Activated naive CD4-positive, alpha-beta T cell treated with anti-CD3 and anti-CD28 coated beads for 36 hours (primary cell): ENCODE measurements at regions of chr1 and their contacts with region 1.

Region 1: GRCh38 chr1:185156854-185157598 is at the starts of genes SWT1 and TRMT1L:
- DNase-seq: peak; percentile 98
- H3K4me3 Mint-ChIP-seq: peak within 1 kb of the TSS; percentile 92
- H3K27ac Mint-ChIP-seq: peak within 1 kb of the TSS; percentile 91
- H3K4me1 Mint-ChIP-seq: peaks cover 44% of the 10 kb centered on the region
- H3K27me3 Mint-ChIP-seq: no peaks in the 10 kb centered on the region
- total RNA-seq, gene SWT1: 1.7 to 2.9 TPM
- total RNA-seq, gene TRMT1L: 26.6 to 28.7 TPM

Region 2: DNA sequence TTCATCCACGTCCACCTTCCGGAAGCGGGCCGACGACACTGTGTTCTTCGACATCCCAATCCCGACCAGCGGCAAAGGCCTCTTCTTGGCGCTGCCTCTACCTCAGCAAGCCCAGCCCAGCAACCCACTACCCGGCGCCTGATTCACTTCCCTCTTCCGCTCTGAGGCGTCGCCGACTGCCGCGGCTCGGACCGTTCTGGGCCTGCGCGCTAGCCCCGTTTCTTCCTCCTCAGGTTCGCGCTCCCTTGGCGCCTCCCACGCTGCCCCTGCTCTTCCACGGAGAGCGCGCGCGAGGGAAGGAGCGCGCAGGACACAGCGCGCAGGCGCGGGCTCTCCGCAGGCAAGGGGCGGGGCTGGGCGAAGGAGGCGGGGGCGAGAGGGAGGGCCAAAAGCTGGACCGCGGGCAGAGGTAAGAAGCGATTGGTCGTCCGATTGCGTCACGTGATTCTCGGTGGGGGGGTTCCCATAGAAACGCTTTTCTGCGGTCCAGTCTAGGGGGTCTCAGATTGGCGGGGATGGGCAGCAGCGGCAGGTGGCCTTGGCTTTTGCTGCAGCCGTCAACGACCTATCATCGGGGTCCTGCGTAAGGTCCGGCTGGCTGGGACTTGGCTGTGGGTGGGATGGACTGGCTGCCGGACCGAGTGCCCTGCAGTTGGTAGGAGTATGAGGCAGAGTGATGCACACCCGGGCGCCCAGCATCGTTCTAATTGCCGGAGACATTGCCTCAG is 1521.3 kb before region 1 on chr1 and contains the start of gene ARPC5:
- CTCF ChIA-PET with region 1: no interaction called
- intact Hi-C with region 1: loop called (anchors 1 kb)
- DNase-seq: peak; percentile 97
- H3K4me3 Mint-ChIP-seq: peak within 1 kb of the TSS; percentile 98
- H3K27ac Mint-ChIP-seq: peak within 1 kb of the TSS; percentile 99
- H3K4me1 Mint-ChIP-seq: peaks cover 27% of the 10 kb centered on the region
- H3K27me3 Mint-ChIP-seq: no peaks in the 10 kb centered on the region
- total RNA-seq, gene ARPC5: 162 to 164 TPM

Region 3: DNA sequence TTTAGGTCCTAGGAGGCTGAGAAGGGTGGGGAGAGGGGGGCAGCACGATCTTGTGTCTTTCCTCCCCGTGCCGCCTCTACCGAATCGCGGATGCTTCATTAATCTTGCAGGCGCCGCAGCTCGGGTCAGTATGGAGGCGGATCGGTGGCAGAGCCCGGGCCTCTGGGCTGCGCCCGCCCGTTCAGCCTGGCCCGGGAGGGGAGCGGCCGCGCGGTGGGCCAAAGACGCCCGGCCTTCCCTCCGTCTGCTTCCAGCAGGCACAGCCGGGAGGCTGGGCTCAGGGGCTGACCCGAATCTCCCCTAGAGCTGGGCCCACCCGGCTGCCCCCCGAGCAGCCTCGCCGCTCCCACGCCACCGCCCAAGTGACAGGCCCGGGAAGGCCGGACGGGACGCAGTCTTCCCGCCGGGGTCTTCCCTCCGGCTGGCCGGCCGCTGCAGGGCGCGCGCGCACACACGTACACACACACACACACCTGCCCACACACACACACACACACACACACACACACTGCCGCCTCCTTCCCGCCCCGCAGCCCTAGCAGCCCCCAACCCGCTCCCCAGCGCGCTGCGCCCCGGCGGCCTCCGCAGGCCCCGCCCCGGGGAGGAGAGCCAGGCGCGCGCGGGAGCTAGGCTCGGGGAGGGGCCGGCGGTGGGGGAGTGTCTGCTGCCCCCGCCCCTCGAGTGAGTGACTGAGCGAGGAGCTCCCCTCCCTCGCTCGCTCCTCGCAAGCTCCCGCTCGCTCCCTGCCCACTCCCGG is 770.5 kb before region 1 on chr1 and contains the start of gene C1orf21:
- CTCF ChIA-PET with region 1: no interaction called
- intact Hi-C with region 1: loop called (anchors 2 kb)
- DNase-seq: peak; percentile 80
- H3K4me3 Mint-ChIP-seq: peak within 1 kb of the TSS; percentile 78
- H3K27ac Mint-ChIP-seq: no peak within 1 kb of the TSS
- H3K4me1 Mint-ChIP-seq: peaks cover 14% of the 10 kb centered on the region
- H3K27me3 Mint-ChIP-seq: peaks cover 59% of the 10 kb centered on the region
- total RNA-seq, gene C1orf21: 1.2 to 1.4 TPM

Region 4: GRCh38 chr1:184881941-184882913 is 274.8 kb before region 1 on chr1:
- CTCF ChIA-PET with region 1: no interaction called
- intact Hi-C with region 1: loop called (anchors 2 kb)
- DNase-seq: peak; percentile 31
- H3K4me3 Mint-ChIP-seq: no peak overlapping the region
- H3K27ac Mint-ChIP-seq: peak overlapping the region; percentile 79
- H3K4me1 Mint-ChIP-seq: peaks cover 25% of the 10 kb centered on the region
- H3K27me3 Mint-ChIP-seq: peaks cover 25% of the 10 kb centered on the region

Region 5: GRCh38 chr1:185144233-185144632 is 12.8 kb before region 1 on chr1:
- CTCF ChIA-PET with region 1: no interaction called
- intact Hi-C with region 1: loop called (anchors 1 kb)
- DNase-seq: no peak
- H3K4me3 Mint-ChIP-seq: no peak overlapping the region
- H3K27ac Mint-ChIP-seq: no peak overlapping the region
- H3K4me1 Mint-ChIP-seq: no peaks in the 10 kb centered on the region
- H3K27me3 Mint-ChIP-seq: no peaks in the 10 kb centered on the region

Region 6: GRCh38 chr1:186289943-186290545 is 1133.0 kb after region 1 on chr1:
- CTCF ChIA-PET with region 1: no interaction called
- intact Hi-C with region 1: loop called (anchors 5 kb)
- DNase-seq: peak; percentile 55
- H3K4me3 Mint-ChIP-seq: peak overlapping the region; percentile 43
- H3K27ac Mint-ChIP-seq: peak overlapping the region; percentile 99
- H3K4me1 Mint-ChIP-seq: peaks cover 90% of the 10 kb centered on the region
- H3K27me3 Mint-ChIP-seq: no peaks in the 10 kb centered on the region